GM10248 (cell line): ENCODE measurements at regions of chr6 and their contacts with region 1.

Region 1: DNA sequence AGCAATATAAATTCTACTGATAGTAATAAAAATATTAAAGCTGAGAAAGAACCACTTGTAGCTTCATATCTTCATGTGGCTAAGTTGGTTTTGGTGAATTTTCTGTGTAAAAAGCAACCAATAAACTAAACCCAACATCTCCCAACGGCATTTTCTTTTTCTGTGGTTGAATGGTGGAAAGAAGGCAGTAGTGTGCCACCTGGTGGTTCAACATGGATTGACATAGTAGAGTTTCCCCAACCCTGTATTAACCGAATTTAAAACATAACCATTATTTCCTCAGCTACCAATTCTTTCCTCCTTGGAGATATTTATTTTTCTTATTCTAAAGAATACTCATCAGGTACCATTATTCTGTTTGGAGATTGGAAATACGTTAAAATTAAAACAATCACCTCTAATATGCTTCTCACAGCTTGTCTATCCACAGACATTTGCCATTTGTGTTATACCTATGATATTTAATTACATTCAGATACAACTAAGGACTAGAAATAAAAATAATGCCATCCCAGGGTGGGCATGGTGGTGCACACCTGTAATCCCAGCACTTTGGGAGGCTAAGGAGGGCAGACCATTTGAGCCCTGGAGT is 117.1 kb upstream of the EEF1E1 start:
- DNase-seq: peak; percentile 49
- CTCF ChIP-seq: peak; percentile 56

Region 2: GRCh38 chr6:8131256-8131897 is 88.1 kb before region 1 on chr6:
- CTCF ChIA-PET with region 1: interaction called, 181 read pairs
- POLR2A ChIA-PET with region 1: no interaction called
- DNase-seq: peak; percentile 37
- CTCF ChIP-seq: peak; percentile 59

Region 3: DNA sequence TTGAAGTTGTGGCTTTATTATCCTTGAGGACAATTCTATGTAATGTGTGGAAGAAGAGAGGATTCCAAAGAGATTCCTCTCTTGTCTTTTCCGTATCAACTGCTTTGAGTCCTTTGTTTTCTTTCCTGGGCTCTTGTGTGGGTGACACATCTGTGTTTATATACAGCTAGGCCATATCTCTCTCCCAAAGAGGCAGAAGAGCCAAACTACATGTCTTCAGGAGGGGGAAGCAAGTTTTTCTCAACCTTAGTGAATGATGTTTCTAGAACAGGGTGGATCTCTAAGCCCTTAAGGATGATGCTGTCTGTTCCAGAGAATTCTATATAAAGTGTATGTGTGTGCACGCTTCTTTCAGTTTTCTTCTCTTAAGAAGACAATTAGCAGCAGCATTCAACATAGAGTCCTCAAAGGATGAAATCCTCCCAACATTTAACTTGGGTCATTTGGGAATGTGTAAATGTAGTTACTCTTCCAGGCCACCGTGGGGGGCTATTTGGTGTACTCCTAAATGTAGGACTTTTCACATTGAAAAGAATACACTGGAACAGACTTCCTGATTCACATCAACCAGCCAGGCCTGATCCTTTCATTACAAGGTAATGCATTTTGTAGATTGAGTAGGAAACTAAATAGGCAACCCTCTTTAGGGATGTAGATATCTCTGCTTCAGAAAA is 24.3 kb before region 1 on chr6:
- CTCF ChIA-PET with region 1: interaction called, 23 read pairs
- POLR2A ChIA-PET with region 1: no interaction called
- DNase-seq: no peak
- CTCF ChIP-seq: peak; percentile 6

Region 4: GRCh38 chr6:8207200-8208191 is 12.0 kb before region 1 on chr6:
- CTCF ChIA-PET with region 1: interaction called, 50 read pairs
- POLR2A ChIA-PET with region 1: no interaction called
- DNase-seq: no peak
- CTCF ChIP-seq: no peak

Region 5: DNA sequence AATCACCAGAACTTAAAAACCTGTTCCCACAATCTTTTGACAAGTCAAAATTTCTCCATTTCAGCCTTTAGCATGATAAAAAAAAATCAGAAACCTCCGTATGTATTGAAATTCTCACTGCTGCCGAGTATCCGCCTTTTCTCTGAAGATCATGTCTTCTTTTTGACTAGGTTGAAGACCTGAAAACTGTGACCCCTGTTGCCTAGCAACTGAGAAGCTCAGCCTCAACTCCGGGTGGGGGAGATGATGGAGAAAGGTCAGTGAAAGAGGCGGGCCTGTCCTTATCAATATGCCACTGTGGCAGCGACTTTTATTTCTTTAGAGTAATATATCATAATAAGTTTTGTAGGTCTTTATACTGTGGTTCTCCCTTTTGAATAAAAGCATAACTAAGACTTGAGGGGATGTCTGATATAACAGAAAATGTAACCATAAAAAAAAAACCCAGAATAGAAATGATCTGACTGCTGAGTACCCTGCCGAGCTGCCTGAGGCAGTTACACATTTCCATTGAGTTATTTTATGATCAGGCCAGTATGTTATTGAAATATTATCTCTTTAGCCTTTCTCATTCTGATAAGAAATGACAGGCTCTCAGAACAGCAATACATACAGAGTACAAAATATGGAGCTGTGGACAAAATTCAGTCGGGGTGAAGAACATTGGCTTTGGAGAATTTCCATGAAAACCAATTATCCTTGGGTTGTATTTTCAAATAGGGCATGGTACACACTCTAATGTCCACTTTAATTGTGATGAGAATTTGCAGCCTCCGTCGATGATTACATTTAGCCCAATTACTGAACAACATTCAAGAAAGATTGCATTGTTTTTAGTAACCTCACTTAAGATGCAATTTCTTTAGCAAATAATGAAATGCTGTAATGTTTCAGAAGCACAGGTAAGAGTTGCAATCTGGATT is 19.6 kb after region 1 on chr6:
- CTCF ChIA-PET with region 1: interaction called, 26 read pairs
- POLR2A ChIA-PET with region 1: no interaction called
- DNase-seq: no peak
- CTCF ChIP-seq: no peak

Region 6: DNA sequence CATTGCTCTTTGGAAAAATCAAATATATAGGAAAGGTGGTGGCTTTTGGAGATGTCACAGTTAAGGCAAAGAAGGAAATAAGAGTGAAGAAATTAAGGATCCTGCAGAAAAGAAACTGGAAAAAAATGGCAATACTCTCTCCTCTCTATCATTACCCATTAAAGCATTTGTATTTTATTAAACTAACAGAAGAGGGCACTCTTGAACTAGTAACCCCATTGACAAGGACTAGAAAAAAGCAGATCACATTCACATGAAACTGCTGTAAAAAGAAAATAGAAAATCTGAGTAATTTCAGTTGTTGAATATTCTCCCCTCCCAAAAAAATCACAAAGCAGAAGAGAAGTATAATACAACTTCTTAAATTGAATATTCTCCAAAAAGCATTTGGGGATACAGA is 320.0 kb after region 1 on chr6:
- CTCF ChIA-PET with region 1: no interaction called
- POLR2A ChIA-PET with region 1: no interaction called
- DNase-seq: peak; percentile 15
- CTCF ChIP-seq: peak; percentile 22